ENCODE measurements at regions of chrX and their contacts with region 1.

Region 1: GRCh38 chrX:128518508-128518907 is 466.3 kb upstream of the ACTRT1 start:
- DNase-seq: peak; percentile 6
- ATAC-seq: peak; percentile 84
- H3K4me3 ChIP-seq: no peak overlapping the region
- H3K27ac ChIP-seq: no peak overlapping the region
- H3K4me1 ChIP-seq: no peaks in the 10 kb centered on the region
- H3K27me3 ChIP-seq: no peaks in the 10 kb centered on the region
- CTCF ChIP-seq: peak; percentile 61
- EP300 ChIP-seq: no peak
- POLR2A ChIP-seq: no peak
- RAD21 ChIP-seq: no peak

Region 2: GRCh38 chrX:128251565-128251964 is 266.9 kb before region 1 on chrX:
- CTCF ChIA-PET with region 1: no interaction called
- POLR2A ChIA-PET with region 1: no interaction called
- in situ Hi-C with region 1: no loop called
- intact Hi-C with region 1: loop called (anchors 2 kb)
- DNase-seq: no peak
- ATAC-seq: no peak
- H3K4me3 ChIP-seq: no peak overlapping the region
- H3K27ac ChIP-seq: no peak overlapping the region
- H3K4me1 ChIP-seq: no peaks in the 10 kb centered on the region
- H3K27me3 ChIP-seq: no peaks in the 10 kb centered on the region
- CTCF ChIP-seq: no peak
- EP300 ChIP-seq: no peak
- POLR2A ChIP-seq: no peak
- RAD21 ChIP-seq: no peak

Region 3: GRCh38 chrX:128504496-128504895 is 14.0 kb before region 1 on chrX:
- CTCF ChIA-PET with region 1: no interaction called
- POLR2A ChIA-PET with region 1: no interaction called
- in situ Hi-C with region 1: no loop called
- intact Hi-C with region 1: no loop called
- DNase-seq: no peak
- ATAC-seq: no peak
- H3K4me3 ChIP-seq: no peak overlapping the region
- H3K27ac ChIP-seq: no peak overlapping the region
- H3K4me1 ChIP-seq: no peaks in the 10 kb centered on the region
- H3K27me3 ChIP-seq: no peaks in the 10 kb centered on the region
- CTCF ChIP-seq: no peak
- EP300 ChIP-seq: no peak
- POLR2A ChIP-seq: no peak
- RAD21 ChIP-seq: no peak